Motor neuron (in vitro differentiated cells): ENCODE measurements at regions of chr16 and their contacts with region 1.

Region 1: DNA sequence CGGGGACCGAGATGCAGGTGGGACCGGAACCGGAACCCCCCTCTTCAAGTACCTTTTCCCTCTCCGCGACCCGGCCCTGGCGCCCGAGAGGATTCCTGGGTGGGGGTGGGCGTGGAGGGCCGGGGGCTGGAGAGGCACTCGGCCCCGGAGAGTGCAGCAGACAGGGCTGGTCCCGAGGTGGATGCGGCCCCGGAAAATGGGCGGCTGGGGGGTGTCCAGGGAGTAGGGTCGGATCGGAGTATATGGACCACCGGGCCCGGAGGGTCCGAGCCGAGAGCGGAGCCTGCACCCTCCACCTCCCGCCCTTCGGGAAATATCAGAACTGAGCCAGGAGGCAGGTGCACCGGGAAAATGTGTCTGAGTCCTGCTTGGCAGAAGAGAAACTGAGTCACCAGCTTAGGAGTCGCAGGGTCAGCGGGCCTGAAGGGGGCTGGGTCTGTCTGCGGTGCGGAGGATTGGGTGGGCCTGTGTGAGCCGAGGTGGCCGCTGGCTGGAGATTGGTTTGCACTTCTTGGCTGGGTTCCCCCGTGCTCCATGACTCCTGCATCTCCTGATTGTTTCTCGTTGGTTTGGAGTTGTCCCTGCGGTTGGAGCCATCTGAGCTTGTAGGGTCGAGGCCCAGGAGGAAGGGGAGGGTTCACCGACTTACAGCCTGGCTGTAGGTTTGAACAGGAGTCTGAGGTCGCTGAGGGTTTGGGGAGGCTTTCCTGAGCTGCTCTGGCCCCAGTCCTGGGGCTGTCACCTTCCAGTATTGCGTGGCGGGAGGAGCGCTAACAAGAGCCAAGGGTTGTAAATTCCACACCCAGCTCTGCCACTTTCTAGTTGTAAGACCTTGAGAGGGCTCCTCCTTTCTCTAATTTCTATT is 518 bp downstream of the SH2B1 start:
- ATAC-seq: peak in 3 of 8 experiments; percentile 2 to 12 (median 3)
- H3K4me3 ChIP-seq: peak overlapping the region; percentile 64 to 99 (median 94)
- H3K27ac ChIP-seq: peak overlapping the region; percentile 96 to 98
- H3K4me1 ChIP-seq: peaks cover 10 to 14% of the 10 kb centered on the region in 2 donors

Region 2: DNA sequence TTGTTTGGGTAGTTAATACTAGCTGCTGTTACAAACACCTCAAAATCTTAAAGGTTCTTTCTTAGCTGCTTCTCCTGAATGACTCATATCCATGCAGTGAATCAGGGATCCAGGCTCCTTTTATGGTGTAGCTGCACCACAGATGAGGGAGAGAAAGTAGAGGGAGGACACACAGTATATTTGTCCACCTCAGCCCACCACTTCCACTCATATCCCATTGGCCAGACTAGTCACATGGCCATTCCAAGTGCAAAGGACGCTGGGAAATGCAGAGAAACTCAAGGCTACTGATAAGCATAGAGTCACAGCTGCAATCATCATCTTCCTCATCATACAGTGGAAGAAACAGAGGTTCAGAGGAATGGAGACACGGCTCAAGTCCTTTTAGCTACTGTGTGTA is 864.5 kb before region 1 on chr16:
- in situ Hi-C with region 1: no loop called
- ATAC-seq: no peak
- H3K4me3 ChIP-seq: no peak overlapping the region
- H3K27ac ChIP-seq: no peak overlapping the region
- H3K4me1 ChIP-seq: no peaks in the 10 kb centered on the region

Region 3: GRCh38 chr16:28924732-28925385 is 60.7 kb after region 1 on chr16 and contains the start of gene RABEP2:
- in situ Hi-C with region 1: loop called in 1 of 9 experiments (anchors 10 kb)
- ATAC-seq: peak; percentile 83 to 96 (median 90)
- H3K4me3 ChIP-seq: peak within 1 kb of the TSS; percentile 65 to 98 (median 79)
- H3K27ac ChIP-seq: peak within 1 kb of the TSS; percentile 89 to 92
- H3K4me1 ChIP-seq: peaks cover 5 to 7% of the 10 kb centered on the region in 2 donors
- total RNA-seq, gene RABEP2: 8.2 to 22.9 (median 11.1) TPM